Calu3 (cell line): ENCODE measurements at regions of chr12 and their contacts with region 1.

Region 1: DNA sequence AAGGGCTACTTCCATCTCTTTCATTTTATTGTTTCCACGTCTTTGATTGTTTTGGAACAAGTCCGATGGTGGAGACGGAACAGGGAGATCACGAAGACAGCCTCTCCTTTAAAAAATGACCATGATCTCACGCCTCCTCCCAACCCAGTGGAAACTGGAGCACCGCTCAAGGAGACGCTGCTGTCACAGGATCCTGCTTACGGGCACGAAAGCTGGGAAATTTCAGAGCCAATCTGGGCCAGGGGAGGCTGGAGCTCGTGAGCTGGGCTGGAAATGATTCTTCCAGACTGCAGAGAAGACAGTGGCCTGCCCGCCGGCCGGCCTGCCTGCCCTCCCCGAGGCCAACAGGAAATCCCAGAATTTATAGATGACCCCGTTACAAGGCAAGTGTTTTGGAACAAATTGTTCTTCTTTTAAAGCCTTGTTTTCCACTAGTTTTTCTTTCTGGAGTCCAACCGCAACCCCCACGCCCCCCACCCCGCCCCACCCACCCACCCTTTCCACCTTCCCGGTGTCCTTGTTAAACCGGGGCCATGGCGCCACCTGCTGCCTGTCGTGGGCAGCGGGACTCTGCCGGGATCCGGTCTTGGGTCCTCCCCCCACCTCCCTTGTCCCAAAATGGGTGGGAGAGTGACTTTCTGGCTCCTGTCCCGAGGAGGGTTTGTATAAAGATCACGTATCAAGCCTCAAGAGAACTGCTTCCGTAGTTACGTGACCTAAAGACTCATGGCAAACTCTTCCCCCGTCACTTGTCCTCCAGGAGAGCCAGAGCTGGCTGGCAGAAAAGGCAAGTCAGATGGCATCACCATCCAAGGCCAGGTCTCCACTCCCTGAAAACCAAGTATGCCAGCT is 40.3 kb downstream of the MAP1LC3B2 start:
- DNase-seq: peak; percentile 77
- H3K4me3 Mint-ChIP-seq: peak overlapping the region; percentile 18
- H3K27ac Mint-ChIP-seq: no peak overlapping the region
- H3K4me1 Mint-ChIP-seq: peaks cover 8% of the 10 kb centered on the region
- H3K27me3 Mint-ChIP-seq: peaks cover 36% of the 10 kb centered on the region
- CTCF ChIP-seq: peak; percentile 54

Region 2: DNA sequence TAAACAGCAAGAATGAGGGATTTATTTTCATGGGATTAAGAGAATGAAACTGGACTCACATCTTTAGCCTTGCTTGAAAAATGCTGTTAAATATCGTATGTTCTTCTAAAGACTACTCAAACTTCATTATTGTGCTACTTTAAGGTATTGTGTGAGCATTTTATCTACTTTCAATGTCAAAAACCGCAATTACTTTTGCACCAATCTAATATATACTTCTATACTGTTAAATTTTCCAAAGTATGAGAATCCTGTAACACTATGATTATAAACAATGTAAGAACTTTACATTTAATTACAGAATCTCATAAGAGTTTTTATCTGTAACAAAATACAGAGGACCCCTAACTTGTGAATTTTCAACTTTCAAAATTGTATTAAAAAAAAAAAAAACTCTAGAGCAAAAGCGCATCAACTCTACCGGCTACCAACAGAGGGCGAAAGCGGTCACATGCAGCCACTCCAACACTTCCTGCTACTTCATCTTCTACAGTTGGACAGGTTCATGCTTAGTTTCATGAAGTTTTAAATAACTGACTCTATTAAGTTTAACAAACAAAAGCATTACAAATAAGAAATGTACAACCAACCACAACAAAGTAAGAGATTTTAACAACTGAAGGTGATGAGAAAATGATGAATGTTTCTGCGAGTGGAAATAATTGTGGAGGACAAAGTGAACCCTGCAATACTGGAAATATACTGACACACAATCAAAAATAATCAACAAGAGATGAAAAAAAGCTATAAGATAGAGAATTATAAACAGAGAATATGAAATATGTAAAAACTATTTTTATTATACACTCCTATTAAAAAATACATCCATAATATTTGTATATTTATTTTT is 532.9 kb before region 1 on chr12:
- CTCF ChIA-PET with region 1: no interaction called
- intact Hi-C with region 1: loop called (anchors 5 kb)
- DNase-seq: peak; percentile 52
- H3K4me3 Mint-ChIP-seq: no peak overlapping the region
- H3K27ac Mint-ChIP-seq: no peak overlapping the region
- H3K4me1 Mint-ChIP-seq: no peaks in the 10 kb centered on the region
- H3K27me3 Mint-ChIP-seq: no peaks in the 10 kb centered on the region
- CTCF ChIP-seq: peak; percentile 89

Region 3: GRCh38 chr12:116142936-116143898 is 456.3 kb before region 1 on chr12:
- CTCF ChIA-PET with region 1: no interaction called
- intact Hi-C with region 1: loop called (anchors 2 kb)
- DNase-seq: no peak
- H3K4me3 Mint-ChIP-seq: no peak overlapping the region
- H3K27ac Mint-ChIP-seq: peak overlapping the region; percentile 81
- H3K4me1 Mint-ChIP-seq: peaks cover 37% of the 10 kb centered on the region
- H3K27me3 Mint-ChIP-seq: no peaks in the 10 kb centered on the region
- CTCF ChIP-seq: no peak

Region 4: DNA sequence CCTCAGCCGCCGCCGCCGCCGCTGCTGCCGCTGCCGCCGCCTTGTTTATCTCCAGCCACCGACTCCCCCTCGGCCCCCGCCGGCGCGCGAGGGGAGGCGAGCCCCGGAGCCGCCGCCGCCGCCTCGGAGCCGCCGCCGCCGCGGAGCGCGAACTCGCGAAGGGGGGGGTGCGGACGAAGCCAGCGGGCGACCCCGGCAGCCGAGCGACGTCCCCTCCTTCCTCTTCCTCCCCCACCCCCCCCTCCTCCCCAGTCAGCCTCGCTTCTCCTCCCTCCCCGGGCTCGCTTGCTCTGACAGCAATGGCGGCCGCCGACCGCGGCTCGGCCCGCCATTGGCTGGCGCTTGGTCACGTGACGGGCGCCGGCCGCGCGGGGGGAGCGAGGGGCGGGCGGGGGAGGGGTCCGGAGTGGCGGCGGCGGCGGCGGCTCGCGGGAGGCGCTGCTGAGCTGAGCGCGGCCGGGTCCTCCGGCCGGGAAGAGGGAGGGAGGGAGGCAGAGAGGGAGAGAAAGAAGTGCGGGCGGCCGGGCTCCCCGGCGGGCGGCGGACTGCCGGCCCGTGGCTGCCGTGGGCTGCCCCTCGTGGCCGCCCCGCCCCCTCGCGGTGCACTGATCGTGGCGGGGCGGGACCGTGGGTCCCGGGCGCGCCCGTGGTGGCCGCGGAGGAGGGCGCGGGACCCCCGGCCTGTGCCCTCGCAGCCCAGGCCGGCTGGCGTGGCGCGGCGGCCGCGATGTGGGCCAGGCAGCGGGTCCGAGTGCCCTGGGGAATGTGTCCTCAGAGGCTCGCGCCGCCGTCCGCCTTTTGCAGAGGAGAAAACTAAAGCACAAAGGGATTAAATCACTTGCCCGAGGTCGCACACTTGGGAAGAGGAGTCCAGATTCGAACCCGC is 321.9 kb before region 1 on chr12 and contains the start of gene MED13L:
- CTCF ChIA-PET with region 1: interaction called, 5 read pairs
- intact Hi-C with region 1: loop called (anchors 2 kb)
- DNase-seq: peak; percentile 92
- H3K4me3 Mint-ChIP-seq: peak within 1 kb of the TSS; percentile 87
- H3K27ac Mint-ChIP-seq: peak within 1 kb of the TSS; percentile 94
- H3K4me1 Mint-ChIP-seq: no peaks in the 10 kb centered on the region
- H3K27me3 Mint-ChIP-seq: peaks cover 10% of the 10 kb centered on the region
- CTCF ChIP-seq: no peak
- total RNA-seq, gene MED13L: 89.0 and 89.6 TPM in 2 replicates

Region 5: GRCh38 chr12:116434155-116435011 is 165.1 kb before region 1 on chr12:
- CTCF ChIA-PET with region 1: no interaction called
- intact Hi-C with region 1: loop called (anchors 10 kb)
- DNase-seq: peak; percentile 81
- H3K4me3 Mint-ChIP-seq: no peak overlapping the region
- H3K27ac Mint-ChIP-seq: no peak overlapping the region
- H3K4me1 Mint-ChIP-seq: no peaks in the 10 kb centered on the region
- H3K27me3 Mint-ChIP-seq: peaks cover 24% of the 10 kb centered on the region
- CTCF ChIP-seq: no peak